ENCODE measurements at regions of chr11 and their contacts with region 1.

Region 1: GRCh38 chr11:1889224-1890120 is 2.2 kb downstream of the PRR33 start:
- DNase-seq: peak in 1 of 2 donors; percentile 26
- H3K4me3 ChIP-seq: no peak overlapping the region
- H3K27ac ChIP-seq: no peak overlapping the region
- H3K4me1 ChIP-seq: no peaks in the 10 kb centered on the region
- H3K27me3 ChIP-seq: no peaks in the 10 kb centered on the region
- CTCF ChIP-seq: no peak
- POLR2A ChIP-seq: no peak

Region 2: DNA sequence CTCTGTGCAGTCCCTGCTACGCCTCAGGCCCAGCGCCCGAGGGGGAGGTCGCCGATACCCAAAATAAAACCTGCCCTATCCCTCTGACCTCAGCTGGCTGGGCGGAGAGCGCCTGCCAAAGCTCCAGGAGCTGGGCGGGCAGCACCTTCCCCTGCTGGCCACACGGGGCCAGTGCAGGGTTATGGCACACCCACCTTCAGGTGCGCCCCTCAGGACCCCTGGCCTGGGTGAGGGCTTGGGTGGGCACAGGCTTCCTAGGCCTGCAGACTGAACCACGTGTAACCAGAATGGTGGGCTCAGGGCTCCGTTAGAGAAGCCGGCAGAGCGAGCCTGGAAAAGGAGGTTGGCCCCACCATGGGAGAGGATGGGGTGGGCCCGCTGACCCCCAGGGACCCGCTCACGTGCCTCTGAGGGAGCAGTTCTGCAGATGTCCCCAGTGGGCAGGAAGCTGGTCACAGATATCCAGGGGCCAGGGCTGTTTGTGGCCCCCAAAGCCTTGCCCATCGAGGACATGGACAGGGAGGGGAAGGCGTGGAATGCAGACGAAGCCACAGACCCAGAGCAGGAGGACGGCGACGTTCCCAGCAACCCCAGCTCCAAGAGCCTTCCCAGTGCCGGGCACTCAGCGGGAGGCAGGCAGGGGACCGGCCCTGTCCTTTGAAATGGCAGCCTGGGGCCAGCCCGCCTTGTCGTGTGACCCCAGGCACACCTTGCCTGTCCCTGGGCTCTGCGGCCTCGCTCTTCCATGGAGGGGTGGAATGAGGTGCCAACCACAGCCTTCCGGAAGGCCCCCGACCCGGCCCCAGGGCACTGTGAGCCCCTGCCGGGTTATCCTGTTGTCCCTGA is 28.4 kb after region 1 on chr11:
- intact Hi-C with region 1: loop called (anchors 1 kb)
- DNase-seq: peak in 1 of 2 donors; percentile 41
- H3K4me3 ChIP-seq: no peak overlapping the region
- H3K27ac ChIP-seq: peak overlapping the region; percentile 37 to 84
- H3K4me1 ChIP-seq: no peaks in the 10 kb centered on the region
- H3K27me3 ChIP-seq: no peaks in the 10 kb centered on the region
- CTCF ChIP-seq: peak in 2 of 4 experiments; percentile 28 to 34
- POLR2A ChIP-seq: no peak

Region 3: GRCh38 chr11:1931341-1932099 is 42.0 kb after region 1 on chr11:
- intact Hi-C with region 1: no loop called
- DNase-seq: peak; percentile 56 to 64
- H3K4me3 ChIP-seq: no peak overlapping the region
- H3K27ac ChIP-seq: peak overlapping the region; percentile 68 to 74
- H3K4me1 ChIP-seq: peaks cover 0 to 4% of the 10 kb centered on the region in 2 donors
- H3K27me3 ChIP-seq: no peaks in the 10 kb centered on the region
- CTCF ChIP-seq: no peak
- POLR2A ChIP-seq: no peak

Region 4: DNA sequence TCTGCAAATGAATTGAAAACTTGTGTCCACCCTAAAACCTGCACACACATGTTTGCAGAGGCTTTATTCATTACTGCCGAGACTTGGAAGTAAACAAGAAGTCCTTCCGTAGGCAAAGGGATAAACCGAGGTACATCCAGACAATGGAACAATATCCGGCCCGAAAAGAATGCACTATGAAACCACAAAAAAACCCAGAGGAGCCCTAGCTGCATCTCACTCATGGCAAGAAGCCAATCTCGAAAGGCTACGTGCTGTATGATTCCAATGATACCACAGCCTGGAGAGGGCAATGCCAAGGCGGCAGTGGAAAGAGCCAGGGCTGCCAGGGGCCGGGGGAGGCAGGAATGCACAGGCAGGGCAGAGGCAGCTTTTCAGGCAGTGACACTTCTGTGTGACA is 54.5 kb after region 1 on chr11:
- intact Hi-C with region 1: loop called (anchors 10 kb)
- DNase-seq: peak; percentile 12 to 13
- H3K4me3 ChIP-seq: no peak overlapping the region
- H3K27ac ChIP-seq: no peak overlapping the region
- H3K4me1 ChIP-seq: peaks cover 0 to 1% of the 10 kb centered on the region in 2 donors
- H3K27me3 ChIP-seq: no peaks in the 10 kb centered on the region
- CTCF ChIP-seq: no peak
- POLR2A ChIP-seq: no peak

Region 5: GRCh38 chr11:2122222-2123085 is 233.0 kb after region 1 on chr11:
- intact Hi-C with region 1: no loop called
- DNase-seq: no peak
- H3K4me3 ChIP-seq: no peak overlapping the region
- H3K27ac ChIP-seq: no peak overlapping the region
- H3K4me1 ChIP-seq: no peaks in the 10 kb centered on the region
- H3K27me3 ChIP-seq: no peaks in the 10 kb centered on the region
- CTCF ChIP-seq: no peak
- POLR2A ChIP-seq: no peak

Measured in uterus (tissue), 4 donors.